ENCODE measurements at regions of chr18 and their contacts with region 1.

Region 1: DNA sequence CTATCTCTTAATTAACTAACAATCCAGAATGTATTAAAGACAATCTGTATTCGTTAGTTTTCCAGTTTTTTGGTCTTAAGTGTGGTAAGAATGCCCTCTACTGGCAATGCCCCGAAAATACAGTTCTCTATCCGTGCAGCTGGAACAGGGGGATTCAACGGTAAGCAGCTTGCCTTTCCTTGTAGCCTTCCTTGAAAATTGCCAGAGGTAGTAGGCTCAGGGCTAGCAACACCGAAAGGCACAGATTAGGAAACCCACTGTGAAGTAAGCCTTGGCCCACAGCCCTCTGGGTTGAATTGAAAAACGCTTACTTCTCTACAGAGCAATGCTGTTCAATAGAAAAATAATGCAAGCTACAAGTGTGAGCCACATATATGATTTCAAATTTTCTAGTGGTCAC is 17.1 kb upstream of the VPS4B start:
- DNase-seq: peak; percentile 49 to 62 (median 56)
- ATAC-seq: peak; percentile 71
- H3K4me3 ChIP-seq: no peak overlapping the region
- H3K27ac ChIP-seq: no peak overlapping the region
- H3K4me1 ChIP-seq: peaks cover 5% of the 10 kb centered on the region
- H3K27me3 ChIP-seq: no peaks in the 10 kb centered on the region
- CTCF ChIP-seq: peak; percentile 61 to 83 (median 80)
- POLR2A ChIP-seq: no peak

Region 2: DNA sequence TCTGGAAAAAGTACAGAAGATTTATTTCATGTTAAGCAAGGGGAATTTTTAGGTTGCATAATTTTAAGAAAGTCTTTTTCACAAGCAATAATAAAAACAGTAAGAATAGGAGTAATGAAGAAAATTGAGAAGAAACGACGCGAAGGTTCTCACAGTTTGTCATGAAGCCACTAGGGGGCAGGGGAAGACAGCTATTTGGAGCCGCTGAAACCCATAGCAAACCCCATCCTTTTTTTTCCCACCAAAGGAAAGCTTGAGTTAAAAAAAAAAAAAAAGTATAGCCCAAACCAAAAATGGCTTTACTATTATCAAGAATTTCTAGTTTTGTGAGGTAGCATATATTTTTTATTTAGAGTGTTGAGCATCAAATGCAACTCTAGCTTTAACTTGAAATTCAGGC is 423.1 kb before region 1 on chr18:
- intact Hi-C with region 1: loop called (anchors 5 kb)
- DNase-seq: peak; percentile 48 to 63 (median 55)
- ATAC-seq: peak; percentile 81
- H3K4me3 ChIP-seq: no peak overlapping the region
- H3K27ac ChIP-seq: no peak overlapping the region
- H3K4me1 ChIP-seq: no peaks in the 10 kb centered on the region
- H3K27me3 ChIP-seq: no peaks in the 10 kb centered on the region
- CTCF ChIP-seq: peak; percentile 47 to 84 (median 80)
- POLR2A ChIP-seq: no peak